ENCODE measurements at regions of chr2 and their contacts with region 1.

Region 1: DNA sequence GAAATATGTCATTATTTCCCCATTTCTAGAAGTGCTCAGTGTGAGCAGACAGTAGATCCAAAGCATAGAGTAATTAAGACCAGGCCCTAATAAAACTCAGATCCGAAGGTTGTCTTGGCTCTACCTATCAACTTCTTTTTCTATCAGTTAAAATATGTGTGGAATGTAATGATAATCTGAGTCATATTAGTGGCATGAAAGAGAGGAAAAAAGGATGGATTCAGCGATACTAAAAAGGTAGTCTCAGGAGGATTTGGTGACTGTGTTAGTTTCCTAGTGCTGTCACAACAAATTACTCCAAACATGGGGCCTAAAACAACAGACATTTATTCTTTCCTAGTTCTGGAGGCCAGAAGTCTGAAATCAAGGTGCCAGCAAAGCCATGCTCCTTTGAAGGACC is 103.7 kb upstream of the NABP1 start:
- DNase-seq: no peak
- H3K4me3 ChIP-seq: no peak overlapping the region
- CTCF ChIP-seq: no peak

Region 2: DNA sequence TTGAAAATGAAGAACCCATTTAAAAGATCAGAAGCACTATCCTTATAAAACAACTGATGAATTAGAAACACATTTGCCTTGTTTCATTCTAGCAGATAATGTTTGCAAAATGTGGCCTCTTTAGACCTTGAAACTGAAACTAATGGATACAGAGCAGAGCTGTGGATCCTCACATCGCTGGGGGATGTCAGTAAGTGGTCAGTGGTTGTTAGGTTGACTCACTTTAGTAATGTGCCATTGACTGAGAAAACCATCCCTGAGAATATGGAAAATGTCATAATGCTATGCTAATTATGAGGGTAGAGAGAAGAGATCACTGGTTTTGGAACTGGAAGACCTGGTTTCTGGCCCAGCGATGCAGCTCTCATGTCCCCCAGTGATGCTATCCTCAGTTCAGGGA is 152.3 kb before region 1 on chr2:
- CTCF ChIA-PET with region 1: no interaction called
- POLR2A ChIA-PET with region 1: no interaction called
- DNase-seq: no peak
- H3K4me3 ChIP-seq: no peak overlapping the region
- CTCF ChIP-seq: no peak

Region 3: DNA sequence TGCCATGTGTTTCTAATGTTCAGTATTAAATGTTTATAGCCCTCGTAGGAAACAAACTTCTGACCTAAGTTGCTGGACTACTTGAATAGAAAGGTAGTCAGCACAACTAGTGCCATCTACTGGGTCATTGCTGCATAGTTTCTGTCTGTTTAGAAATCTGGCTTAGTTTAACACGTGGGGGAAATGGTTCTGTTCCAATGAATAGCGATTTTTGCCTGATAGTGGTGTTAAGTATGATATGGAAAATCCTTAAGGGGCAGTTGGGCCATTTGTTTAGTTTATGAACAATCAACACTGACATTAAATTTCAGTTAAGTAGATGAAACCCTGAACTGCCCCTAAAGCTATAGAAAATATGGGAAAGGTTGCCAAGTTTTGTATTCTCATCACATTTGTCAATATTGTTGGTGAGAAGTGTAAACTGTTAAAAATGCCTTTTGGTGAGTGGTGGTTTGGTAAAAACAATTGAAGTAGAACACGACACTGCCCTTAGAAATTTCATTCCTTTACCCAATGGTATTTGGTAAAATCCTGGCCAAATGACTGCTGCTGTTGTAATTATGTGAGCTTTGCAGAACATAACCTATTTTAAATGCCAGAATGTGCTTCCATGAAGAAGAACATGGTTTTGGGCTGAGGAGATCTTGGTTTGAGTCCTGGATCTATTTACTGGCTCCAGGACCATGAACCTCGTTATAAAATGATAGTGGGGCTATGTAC is 116.9 kb after region 1 on chr2:
- CTCF ChIA-PET with region 1: interaction called, 20 read pairs
- POLR2A ChIA-PET with region 1: interaction called, 4 read pairs
- DNase-seq: peak; percentile 60
- H3K4me3 ChIP-seq: no peak overlapping the region
- CTCF ChIP-seq: peak; percentile 73

Measured in AG04449 (cell line).